Mammary epithelial cell (primary cell): ENCODE measurements at regions of chr2 and their contacts with region 1.

Region 1: DNA sequence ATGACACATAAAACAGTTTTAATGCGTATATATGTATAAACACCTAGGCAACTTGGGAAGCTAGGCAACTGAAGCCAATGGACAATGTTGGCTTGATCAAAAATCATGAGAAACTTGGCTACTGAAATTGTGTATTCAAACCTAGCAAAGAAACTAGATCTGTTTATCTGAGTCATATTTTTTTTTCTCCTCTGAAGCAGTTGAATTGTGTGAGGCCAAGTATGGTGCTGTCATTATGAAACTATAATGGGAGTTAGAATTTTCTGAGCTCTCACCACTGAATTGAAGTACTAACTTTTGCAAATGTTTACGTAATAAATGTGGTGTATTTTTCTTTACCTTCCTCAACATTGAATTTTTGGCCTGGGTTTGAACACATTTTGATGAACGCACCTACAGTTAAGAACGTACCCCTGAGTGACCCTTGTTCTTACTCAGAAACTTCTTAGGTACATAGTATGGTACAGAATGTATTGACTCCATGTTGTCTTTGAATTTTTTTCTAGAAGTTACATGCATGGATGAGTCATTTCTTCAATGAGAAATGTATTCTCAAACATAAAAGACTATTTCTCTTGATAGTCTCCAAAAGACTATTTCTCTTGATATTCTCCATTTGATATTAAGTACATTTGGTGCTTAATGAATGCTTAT is 23.8 kb downstream of the CD28 start:
- DNase-seq: peak; percentile 26
- H3K4me3 ChIP-seq: no peak overlapping the region
- H3K27ac ChIP-seq: peak overlapping the region; percentile 56
- H3K4me1 ChIP-seq: peaks cover 15% of the 10 kb centered on the region
- H3K27me3 ChIP-seq: no peaks in the 10 kb centered on the region
- CTCF ChIP-seq: no peak

Region 2: DNA sequence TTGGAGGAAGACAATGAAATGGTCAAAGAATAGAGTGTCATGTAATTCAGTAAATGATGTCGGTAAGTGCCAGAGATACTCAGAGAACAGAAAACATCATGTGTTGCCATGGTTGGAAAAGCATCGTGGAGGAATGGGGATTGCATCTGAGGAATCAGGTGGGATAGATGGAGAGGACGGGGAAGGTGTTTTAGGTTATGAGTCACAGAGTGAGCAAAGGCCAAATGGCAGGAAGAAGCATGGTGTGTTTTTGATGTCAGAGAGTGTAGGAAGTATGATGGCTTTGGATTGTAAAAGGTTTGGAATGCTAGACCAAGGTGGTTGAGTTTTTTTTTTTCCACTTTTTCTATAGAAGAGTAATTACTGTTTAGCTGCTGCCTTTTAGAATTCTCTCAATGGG is 51.2 kb before region 1 on chr2:
- CTCF ChIA-PET with region 1: no interaction called
- dilution Hi-C with region 1: no loop called
- in situ Hi-C with region 1: no loop called
- intact Hi-C with region 1: no loop called
- DNase-seq: peak; percentile 74
- H3K4me3 ChIP-seq: no peak overlapping the region
- H3K27ac ChIP-seq: peak overlapping the region; percentile 55
- H3K4me1 ChIP-seq: peaks cover 52% of the 10 kb centered on the region
- H3K27me3 ChIP-seq: no peaks in the 10 kb centered on the region
- CTCF ChIP-seq: no peak

Region 3: DNA sequence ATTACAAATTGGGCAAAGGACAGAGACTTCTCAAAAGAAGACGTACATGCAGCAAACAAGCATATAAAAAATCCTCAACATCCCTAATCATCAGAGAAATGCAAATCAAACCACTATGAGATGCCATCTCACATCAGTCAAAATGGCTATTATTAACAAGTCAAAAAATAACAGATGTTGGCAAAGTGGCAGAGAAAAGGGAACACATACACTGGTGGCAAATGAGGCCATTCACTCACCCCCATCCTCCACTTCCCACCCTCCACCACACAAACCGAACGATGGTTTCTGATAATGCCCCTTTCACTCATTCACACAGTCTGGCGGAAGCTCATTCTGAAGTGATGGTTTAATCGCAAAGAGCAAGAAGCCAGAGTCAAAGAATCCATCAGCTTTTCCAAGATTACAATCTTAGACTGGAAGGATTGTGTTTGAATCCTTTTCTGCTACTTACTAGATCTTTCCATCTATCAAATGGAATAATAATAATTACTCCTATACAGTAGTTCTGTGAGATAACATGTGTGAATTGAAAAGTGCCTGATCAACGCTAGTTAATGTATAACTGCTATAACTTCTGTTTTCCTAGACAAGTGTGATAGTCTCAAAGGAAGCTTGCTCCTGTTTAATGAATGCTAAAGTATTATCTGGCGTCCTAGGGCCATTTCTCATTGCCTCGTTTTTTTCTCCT is 40.6 kb before region 1 on chr2:
- CTCF ChIA-PET with region 1: no interaction called
- dilution Hi-C with region 1: no loop called
- in situ Hi-C with region 1: no loop called
- intact Hi-C with region 1: loop called (anchors 2 kb)
- DNase-seq: no peak
- H3K4me3 ChIP-seq: no peak overlapping the region
- H3K27ac ChIP-seq: no peak overlapping the region
- H3K4me1 ChIP-seq: peaks cover 32% of the 10 kb centered on the region
- H3K27me3 ChIP-seq: no peaks in the 10 kb centered on the region
- CTCF ChIP-seq: no peak

Region 4: GRCh38 chr2:203772456-203773168 is 42.4 kb after region 1 on chr2:
- CTCF ChIA-PET with region 1: no interaction called
- dilution Hi-C with region 1: no loop called
- in situ Hi-C with region 1: no loop called
- intact Hi-C with region 1: no loop called
- DNase-seq: no peak
- H3K4me3 ChIP-seq: no peak overlapping the region
- H3K27ac ChIP-seq: no peak overlapping the region
- H3K4me1 ChIP-seq: no peaks in the 10 kb centered on the region
- H3K27me3 ChIP-seq: no peaks in the 10 kb centered on the region
- CTCF ChIP-seq: no peak